Common myeloid progenitor, CD34-positive (primary cell): ENCODE measurements at regions of chr19 and their contacts with region 1.

Region 1: GRCh38 chr19:18419195-18419698 is at the start of gene SSBP4:
- DNase-seq: peak; percentile 68 to 89 (median 85)
- H3K4me3 ChIP-seq: peak within 1 kb of the TSS; percentile 24 to 77 (median 65)
- H3K27ac ChIP-seq: peak within 1 kb of the TSS in 1 of 2 experiments; percentile 56
- H3K4me1 ChIP-seq: peaks cover 3 to 82% (median 74%) of the 10 kb centered on the region in 4 experiments
- H3K27me3 ChIP-seq: no peaks in the 10 kb centered on the region

Region 2: DNA sequence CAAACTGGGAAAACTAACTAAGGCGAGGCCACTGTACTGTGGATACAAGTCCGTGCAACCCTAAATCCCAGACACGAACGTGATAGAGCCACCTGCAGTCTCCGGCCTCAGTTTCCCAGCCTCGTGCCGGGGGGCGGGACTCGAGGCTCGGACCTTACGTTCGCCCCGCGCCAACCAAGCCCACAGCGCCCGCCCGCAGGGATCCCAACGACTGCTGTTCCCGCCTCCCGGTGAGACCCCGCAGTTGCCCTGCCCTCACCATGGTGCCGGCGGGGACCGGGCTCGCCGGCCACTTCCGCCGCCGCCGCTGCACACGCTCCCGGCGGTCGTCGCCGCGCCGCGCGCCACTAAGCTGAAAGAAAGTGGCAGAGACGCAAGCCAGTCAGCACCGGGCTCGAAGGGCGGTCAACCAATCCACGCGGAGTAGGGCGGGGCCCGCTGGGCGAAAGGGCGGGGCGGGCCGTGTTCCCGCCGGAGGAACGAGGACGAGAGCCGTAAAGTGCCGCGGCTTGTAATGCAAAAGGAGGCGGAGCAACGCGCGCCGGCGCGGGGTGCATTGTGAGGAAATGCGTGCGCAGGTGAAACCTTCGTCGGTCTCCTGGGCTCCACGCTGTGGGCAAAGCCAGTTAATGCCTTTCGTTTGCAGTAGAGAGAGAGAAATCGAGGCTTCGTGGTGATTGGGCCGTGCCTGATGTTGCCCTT is 96.3 kb before region 1 on chr19 and contains the start of gene LSM4:
- CTCF ChIA-PET with region 1: no interaction called
- POLR2A ChIA-PET with region 1: no interaction called
- DNase-seq: peak; percentile 99
- H3K4me3 ChIP-seq: peak within 1 kb of the TSS; percentile 63 to 95 (median 82)
- H3K27ac ChIP-seq: peak within 1 kb of the TSS; percentile 51 to 89
- H3K4me1 ChIP-seq: peaks cover 13 to 62% (median 56%) of the 10 kb centered on the region in 4 experiments
- H3K27me3 ChIP-seq: no peaks in the 10 kb centered on the region

Region 3: DNA sequence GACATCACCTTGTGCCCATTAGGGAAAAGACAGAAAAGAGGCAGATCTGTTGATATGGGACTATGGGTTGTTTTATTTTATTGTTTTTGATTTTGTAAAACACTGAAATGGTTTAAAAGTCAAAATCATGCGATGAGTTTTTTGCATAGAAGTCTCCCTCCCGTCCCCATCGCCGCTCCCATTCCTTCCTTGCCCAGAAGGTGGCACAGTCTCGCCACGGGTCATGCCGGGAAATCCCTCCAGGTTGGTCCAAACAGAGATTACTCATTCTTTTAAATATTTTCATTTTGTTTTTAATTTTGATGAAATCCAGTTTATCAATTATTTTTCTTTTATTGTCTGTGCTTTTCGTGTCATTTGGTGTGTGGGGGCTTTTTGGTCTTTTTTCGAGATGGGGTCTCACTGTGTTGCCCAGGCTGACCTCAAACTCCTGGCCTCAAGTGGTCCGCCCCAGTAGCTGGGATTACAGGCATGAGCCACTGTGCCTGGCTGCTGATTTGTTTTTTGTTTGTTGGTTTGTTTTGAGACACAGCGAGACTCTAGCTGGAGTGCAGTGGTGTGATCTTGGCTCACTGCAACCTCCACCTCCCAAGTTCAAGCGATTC is 69.6 kb before region 1 on chr19:
- CTCF ChIA-PET with region 1: interaction called, 100 read pairs
- POLR2A ChIA-PET with region 1: no interaction called
- DNase-seq: peak; percentile 54 to 79 (median 73)
- H3K4me3 ChIP-seq: no peak overlapping the region
- H3K27ac ChIP-seq: no peak overlapping the region
- H3K4me1 ChIP-seq: no peaks in the 10 kb centered on the region
- H3K27me3 ChIP-seq: no peaks in the 10 kb centered on the region